ENCODE measurements at regions of chr11 and their contacts with region 1.

Region 1: GRCh38 chr11:66268283-66268951 is at the start of gene RAB1B:
- DNase-seq: peak; percentile 99 to 100
- ATAC-seq: peak; percentile 77 to 93 (median 83)
- H3K4me3 ChIP-seq: peak within 1 kb of the TSS; percentile 89
- H3K4me3 Mint-ChIP-seq: peak within 1 kb of the TSS; percentile 97
- H3K27ac ChIP-seq: peak within 1 kb of the TSS; percentile 85
- H3K27ac Mint-ChIP-seq: peak within 1 kb of the TSS; percentile 95 to 98
- H3K4me1 ChIP-seq: peaks cover 64% of the 10 kb centered on the region
- H3K4me1 Mint-ChIP-seq: peaks cover 51 to 57% of the 10 kb centered on the region in 2 donors
- H3K27me3 ChIP-seq: no peaks in the 10 kb centered on the region
- H3K27me3 Mint-ChIP-seq: no peaks in the 10 kb centered on the region
- CTCF ChIP-seq: no peak
- total RNA-seq, gene RAB1B: 116 to 144 (median 132) TPM

Region 2: GRCh38 chr11:66282468-66283386 is 14.3 kb after region 1 on chr11:
- intact Hi-C with region 1: loop called (anchors 1 kb)
- DNase-seq: peak; percentile 99 to 100
- ATAC-seq: peak; percentile 80 to 95 (median 86)
- H3K4me3 ChIP-seq: no peak overlapping the region
- H3K4me3 Mint-ChIP-seq: peak overlapping the region; percentile 50
- H3K27ac ChIP-seq: peak overlapping the region; percentile 19
- H3K27ac Mint-ChIP-seq: peak overlapping the region; percentile 74 to 89
- H3K4me1 ChIP-seq: peaks cover 38% of the 10 kb centered on the region
- H3K4me1 Mint-ChIP-seq: peaks cover 5 to 50% of the 10 kb centered on the region in 2 donors
- H3K27me3 ChIP-seq: peaks cover 10% of the 10 kb centered on the region
- H3K27me3 Mint-ChIP-seq: peaks cover 7 to 14% of the 10 kb centered on the region in 2 donors
- CTCF ChIP-seq: peak; percentile 92

Region 3: DNA sequence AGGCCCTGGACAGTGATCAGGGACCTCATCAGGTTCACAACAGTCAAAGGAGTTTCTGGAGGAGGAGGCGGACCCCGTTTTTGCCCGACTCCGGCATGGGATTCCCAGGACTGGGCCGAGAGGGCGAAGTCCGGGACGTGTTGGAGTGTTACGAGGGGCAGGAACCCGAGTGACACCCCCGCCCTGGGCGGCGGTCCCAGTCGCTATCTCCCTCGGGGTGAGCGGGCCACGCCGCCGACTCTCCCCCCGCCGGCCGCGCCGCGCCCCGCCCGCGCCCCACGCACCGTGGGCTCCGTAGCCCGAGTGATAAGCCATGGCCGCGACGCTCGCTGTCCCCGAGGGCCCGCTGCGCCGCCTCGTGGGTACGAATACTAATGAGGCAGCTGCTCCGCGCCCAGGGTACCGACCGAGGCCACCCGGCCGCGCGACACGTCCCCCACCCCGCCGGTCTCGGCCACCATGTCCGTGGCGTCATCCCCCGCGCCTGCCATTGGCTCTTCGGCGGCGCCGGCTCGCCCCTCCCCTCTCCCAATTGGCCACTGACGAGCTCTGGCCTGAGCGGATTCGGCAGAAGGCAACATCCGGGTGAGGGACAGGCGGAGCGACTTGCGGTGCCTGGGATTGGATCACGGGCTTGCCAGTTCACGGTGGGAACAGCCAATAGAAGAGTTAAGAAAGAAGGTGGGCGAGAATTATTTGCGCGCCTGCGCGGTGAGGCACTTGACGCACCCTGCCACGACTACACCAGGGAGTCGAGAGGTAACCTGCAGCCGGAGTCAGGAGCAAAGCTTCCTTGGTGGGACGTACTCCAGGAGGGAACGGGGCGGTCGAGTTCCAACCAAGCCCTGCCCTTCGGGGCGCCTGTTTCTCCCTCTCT is 20.5 kb after region 1 on chr11 and contains the start of gene YIF1A:
- intact Hi-C with region 1: loop called (anchors 1 kb)
- DNase-seq: peak; percentile 97 to 99
- ATAC-seq: peak; percentile 91 to 98 (median 91)
- H3K4me3 ChIP-seq: peak within 1 kb of the TSS; percentile 69
- H3K4me3 Mint-ChIP-seq: peak within 1 kb of the TSS; percentile 96
- H3K27ac ChIP-seq: peak within 1 kb of the TSS; percentile 82
- H3K27ac Mint-ChIP-seq: peak within 1 kb of the TSS; percentile 87 to 89
- H3K4me1 ChIP-seq: peaks cover 37% of the 10 kb centered on the region
- H3K4me1 Mint-ChIP-seq: peaks cover 24 to 43% of the 10 kb centered on the region in 2 donors
- H3K27me3 ChIP-seq: peaks cover 11% of the 10 kb centered on the region
- H3K27me3 Mint-ChIP-seq: peaks cover 28% of the 10 kb centered on the region in 2 donors
- CTCF ChIP-seq: no peak
- total RNA-seq, gene YIF1A: 21.9 to 28.5 (median 23.6) TPM

Measured in natural killer cell (primary cell).